HCT116 (cell line): ENCODE measurements at regions of chr1 and their contacts with region 1.

Region 1: DNA sequence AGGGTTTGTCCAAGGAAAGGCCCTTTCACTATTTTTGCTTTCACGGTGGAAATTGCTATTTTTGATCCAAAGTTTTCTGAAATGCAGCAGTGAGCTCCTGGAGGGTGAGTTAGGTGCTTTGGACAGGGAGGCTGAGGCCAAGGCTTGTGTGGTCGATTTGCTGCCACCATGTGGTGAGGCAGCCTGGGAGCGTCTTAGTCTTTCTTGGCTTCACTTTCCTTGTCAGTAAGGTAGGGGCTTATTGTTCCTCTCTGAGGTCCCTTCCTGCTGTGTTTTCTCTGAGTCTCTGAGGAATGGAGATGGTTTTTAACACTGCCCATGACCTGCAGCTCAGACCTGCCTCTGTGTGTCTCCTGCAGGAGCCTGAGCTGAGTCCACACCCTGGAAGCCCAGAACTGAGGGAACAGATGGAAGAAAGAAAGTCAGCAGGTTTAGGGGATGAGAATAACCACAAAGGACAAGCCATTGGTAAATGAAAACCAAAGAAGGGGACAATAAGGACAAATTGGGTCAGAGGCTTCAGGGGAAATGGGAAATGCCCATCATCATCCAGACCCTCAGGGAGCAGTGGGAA is 20.1 kb upstream of the S100A10 start:
- DNase-seq: no peak
- ATAC-seq: peak; percentile 83
- H3K4me3 ChIP-seq: no peak overlapping the region
- H3K27ac ChIP-seq: no peak overlapping the region
- H3K4me1 ChIP-seq: peaks cover 0 to 4% of the 10 kb centered on the region in 2 experiments; a peak in 1 of 4 replicates
- H3K27me3 ChIP-seq: no peaks in the 10 kb centered on the region
- CTCF ChIP-seq: peak; percentile 61 to 94 (median 84); a peak in 5 of 6 replicates
- POLR2A ChIP-seq: no peak
- RAD21 ChIP-seq: peak; percentile 62

Region 2: GRCh38 chr1:151909150-151910149 is 104.3 kb before region 1 on chr1 and contains the start of gene THEM4:
- CTCF ChIA-PET with region 1: interaction called, 10 read pairs
- POLR2A ChIA-PET with region 1: no interaction called
- RAD21 ChIA-PET with region 1: no interaction called
- intact Hi-C with region 1: no loop called
- DNase-seq: peak; percentile 92
- ATAC-seq: peak; percentile 95
- H3K4me3 ChIP-seq: peak within 1 kb of the TSS; percentile 86 to 87
- H3K27ac ChIP-seq: peak within 1 kb of the TSS; percentile 74
- H3K4me1 ChIP-seq: peaks cover 7 to 14% of the 10 kb centered on the region in 2 experiments; a peak in 3 of 4 replicates
- H3K27me3 ChIP-seq: no peaks in the 10 kb centered on the region
- CTCF ChIP-seq: no peak
- POLR2A ChIP-seq: peak; percentile 92
- RAD21 ChIP-seq: no peak
- total RNA-seq, gene THEM4: 17.0 TPM

Region 3: GRCh38 chr1:151968058-151968457 is 45.7 kb before region 1 on chr1:
- CTCF ChIA-PET with region 1: interaction called, 22 read pairs
- POLR2A ChIA-PET with region 1: no interaction called
- RAD21 ChIA-PET with region 1: interaction called in 1 of 2 experiments, 4 read pairs
- intact Hi-C with region 1: no loop called
- DNase-seq: no peak
- ATAC-seq: peak; percentile 71
- H3K4me3 ChIP-seq: no peak overlapping the region
- H3K27ac ChIP-seq: no peak overlapping the region
- H3K4me1 ChIP-seq: peaks cover 35 to 50% of the 10 kb centered on the region in 2 experiments; a peak in 3 of 4 replicates
- H3K27me3 ChIP-seq: no peaks in the 10 kb centered on the region
- CTCF ChIP-seq: peak; percentile 79 to 91 (median 85)
- POLR2A ChIP-seq: no peak
- RAD21 ChIP-seq: peak; percentile 98